A673 (cell line): ENCODE measurements at regions of chr20 and their contacts with region 1.

Region 1: GRCh38 chr20:22333885-22334545 is 250.4 kb downstream of the FOXA2 start:
- DNase-seq: peak; percentile 70
- H3K4me3 ChIP-seq: no peak overlapping the region
- H3K27ac ChIP-seq: no peak overlapping the region
- H3K4me1 ChIP-seq: no peaks in the 10 kb centered on the region
- H3K27me3 ChIP-seq: peaks cover 41% of the 10 kb centered on the region
- CTCF ChIP-seq: peak; percentile 79

Region 2: DNA sequence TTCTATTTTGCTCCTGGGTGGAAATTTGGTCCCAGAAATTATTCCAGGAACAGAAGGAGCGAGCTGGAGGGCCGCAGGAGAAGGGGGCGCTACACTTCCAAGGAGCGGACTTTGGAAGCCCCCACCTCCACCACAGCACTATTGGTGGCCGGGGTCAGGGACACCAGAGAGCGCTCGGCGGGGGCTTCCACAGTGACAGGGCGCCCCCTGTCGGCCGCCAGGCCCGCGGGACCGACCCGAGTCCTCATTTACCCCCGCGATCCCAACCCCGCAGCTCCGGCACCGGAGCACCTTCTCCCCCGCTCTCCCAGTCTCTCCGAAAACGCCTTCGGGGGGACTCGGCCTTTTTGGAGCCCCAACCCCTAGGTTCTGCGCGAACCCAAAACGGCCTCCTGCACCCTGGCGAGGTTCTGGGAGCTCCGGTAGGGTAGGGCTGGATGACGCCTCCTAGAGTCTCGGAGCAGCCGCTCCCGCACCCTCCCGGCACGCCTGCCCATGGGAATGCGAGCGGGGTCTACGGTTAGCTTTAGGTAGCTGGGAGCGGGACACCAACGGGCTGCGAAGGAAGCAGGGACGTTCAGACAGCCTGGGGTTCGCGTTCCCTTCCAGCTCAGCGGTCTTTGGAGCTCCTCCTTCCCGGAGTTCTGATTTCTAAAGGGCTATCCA is 252.8 kb after region 1 on chr20:
- CTCF ChIA-PET with region 1: interaction called, 6 read pairs
- POLR2A ChIA-PET with region 1: no interaction called
- intact Hi-C with region 1: loop called (anchors 1 kb)
- DNase-seq: peak; percentile 34
- H3K4me3 ChIP-seq: no peak overlapping the region
- H3K27ac ChIP-seq: no peak overlapping the region
- H3K4me1 ChIP-seq: no peaks in the 10 kb centered on the region
- H3K27me3 ChIP-seq: peaks cover 97% of the 10 kb centered on the region
- CTCF ChIP-seq: peak; percentile 68

Region 3: GRCh38 chr20:22684072-22684762 is 350.2 kb after region 1 on chr20:
- CTCF ChIA-PET with region 1: no interaction called
- POLR2A ChIA-PET with region 1: no interaction called
- intact Hi-C with region 1: loop called (anchors 1 kb)
- DNase-seq: peak; percentile 72
- H3K4me3 ChIP-seq: no peak overlapping the region
- H3K27ac ChIP-seq: no peak overlapping the region
- H3K4me1 ChIP-seq: no peaks in the 10 kb centered on the region
- H3K27me3 ChIP-seq: peaks cover 5% of the 10 kb centered on the region
- CTCF ChIP-seq: peak; percentile 80

Region 4: GRCh38 chr20:23340524-23340923 is 1006.5 kb after region 1 on chr20:
- CTCF ChIA-PET with region 1: interaction called, 6 read pairs
- POLR2A ChIA-PET with region 1: no interaction called
- intact Hi-C with region 1: loop called (anchors 5 kb)
- DNase-seq: peak; percentile 78
- H3K4me3 ChIP-seq: no peak overlapping the region
- H3K27ac ChIP-seq: no peak overlapping the region
- H3K4me1 ChIP-seq: peaks cover 4% of the 10 kb centered on the region
- H3K27me3 ChIP-seq: no peaks in the 10 kb centered on the region
- CTCF ChIP-seq: peak; percentile 71